Lower leg skin (tissue), 4 donors: ENCODE measurements at regions of chr3 and their contacts with region 1.

Region 1: GRCh38 chr3:15268033-15268631 is 62.1 kb downstream of the CAPN7 start:
- DNase-seq: peak; percentile 85 to 97
- H3K4me3 ChIP-seq: no peak overlapping the region
- CTCF ChIP-seq: peak in 1 of 3 donors; percentile 71
- POLR2A ChIP-seq: no peak

Region 2: DNA sequence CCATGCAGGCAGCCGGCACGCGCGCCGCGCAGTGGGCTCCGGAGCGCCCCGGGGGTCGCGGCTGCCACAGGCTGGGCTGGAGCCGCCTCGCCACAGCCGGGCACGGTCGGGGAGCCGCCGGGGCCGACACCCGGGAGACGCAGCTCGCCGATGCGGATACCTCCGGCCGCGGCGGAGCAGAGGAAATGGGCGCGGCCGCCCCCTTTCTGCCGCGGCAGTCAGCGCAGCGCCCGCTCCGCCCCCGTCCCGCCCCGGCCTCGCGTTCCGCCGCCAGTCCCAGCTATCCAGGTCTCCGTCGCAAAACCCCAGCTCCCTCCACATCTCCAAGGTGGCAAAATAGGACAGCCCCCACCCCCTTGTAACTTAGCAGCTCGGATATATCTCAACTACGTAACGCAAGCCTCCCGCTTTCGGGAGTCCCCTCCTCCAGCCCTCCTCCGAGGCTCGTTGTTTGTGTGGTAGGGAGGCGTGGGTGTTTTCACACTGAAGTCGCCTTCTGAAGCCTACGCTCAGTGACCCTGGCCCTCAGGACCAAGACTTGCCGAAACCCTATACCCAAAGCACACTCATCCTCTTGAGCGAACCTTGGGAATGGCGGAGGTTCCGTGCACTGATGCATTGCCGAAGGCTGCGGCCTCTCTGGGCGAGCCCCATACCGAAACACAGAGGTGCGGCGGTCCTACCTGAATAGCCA is 64.4 kb after region 1 on chr3 and contains the start of gene SH3BP5:
- intact Hi-C with region 1: loop called (anchors 5 kb)
- DNase-seq: peak; percentile 55 to 95
- H3K4me3 ChIP-seq: peak within 1 kb of the TSS; percentile 93
- CTCF ChIP-seq: no peak
- POLR2A ChIP-seq: peak in 1 of 2 donors; percentile 30
- total RNA-seq, gene SH3BP5: 10.7 to 30.3 (median 18.5) TPM

Region 3: GRCh38 chr3:15377961-15378791 is 110.0 kb after region 1 on chr3:
- intact Hi-C with region 1: loop called (anchors 5 kb)
- DNase-seq: peak; percentile 93 to 98
- H3K4me3 ChIP-seq: no peak overlapping the region
- CTCF ChIP-seq: peak in 1 of 3 donors; percentile 76
- POLR2A ChIP-seq: no peak